OCI-LY7 (cell line): ENCODE measurements at regions of chr4 and their contacts with region 1.

Region 1: DNA sequence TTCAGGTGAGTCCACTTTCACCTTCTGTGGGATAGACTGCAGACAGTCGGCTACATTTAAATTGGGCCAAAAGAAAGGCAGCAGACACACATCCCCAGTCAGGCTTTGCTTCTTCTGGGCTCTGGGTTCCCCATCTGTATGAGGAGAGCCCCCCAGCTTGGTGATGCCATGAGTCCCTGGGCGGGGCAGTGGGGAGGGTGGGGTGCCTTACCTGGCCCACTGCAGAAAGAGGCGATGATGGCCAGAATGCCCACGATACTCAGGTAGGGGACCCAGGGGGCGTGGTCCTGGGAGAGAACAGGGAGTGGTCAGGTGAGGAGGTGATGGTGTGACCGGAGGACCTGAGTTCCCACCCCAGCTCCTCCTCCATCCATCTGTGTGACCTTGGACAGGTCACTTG is 105.9 kb downstream of the DRD5 start:
- DNase-seq: no peak
- H3K4me3 ChIP-seq: no peak overlapping the region
- H3K27ac ChIP-seq: no peak overlapping the region
- H3K4me1 ChIP-seq: no peaks in the 10 kb centered on the region
- CTCF ChIP-seq: no peak

Region 2: DNA sequence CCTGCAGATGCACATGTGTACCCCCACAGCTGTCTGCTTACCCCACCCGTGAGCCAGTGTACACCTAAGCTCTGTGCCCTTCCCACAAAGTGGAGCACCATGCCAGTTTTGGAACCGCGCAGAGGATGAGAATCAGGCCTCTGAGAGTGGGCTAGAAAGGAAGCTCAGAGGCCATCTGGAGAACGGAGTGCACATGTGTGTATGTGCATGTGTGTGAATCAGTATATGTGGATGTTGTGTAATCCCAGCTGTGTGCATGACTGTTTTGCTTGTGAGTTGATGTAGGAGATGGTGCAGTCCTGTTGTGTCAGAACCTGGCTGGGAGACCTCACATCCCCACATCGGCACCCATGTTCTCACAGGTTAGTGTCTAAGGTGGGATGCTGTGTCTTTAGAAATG is 13.0 kb before region 1 on chr4:
- CTCF ChIA-PET with region 1: interaction called, 11 read pairs
- POLR2A ChIA-PET with region 1: no interaction called
- intact Hi-C with region 1: no loop called
- DNase-seq: no peak
- H3K4me3 ChIP-seq: no peak overlapping the region
- H3K27ac ChIP-seq: no peak overlapping the region
- H3K4me1 ChIP-seq: no peaks in the 10 kb centered on the region
- CTCF ChIP-seq: no peak